Activated CD4-positive, alpha-beta T cell treated with anti-CD3 and anti-CD28 coated beads, Interleukin-2, amount 10 ng/mL, durations not matched to agents 24 days and 14 days (primary cell): ENCODE measurements at regions of chr20 and their contacts with region 1.

Region 1: GRCh38 chr20:51404298-51405060 is 138.0 kb downstream of the NFATC2 start:
- DNase-seq: peak; percentile 94
- H3K4me3 Mint-ChIP-seq: peak overlapping the region; percentile 75
- H3K27ac Mint-ChIP-seq: peak overlapping the region; percentile 97
- H3K4me1 Mint-ChIP-seq: peaks cover 81% of the 10 kb centered on the region
- H3K27me3 Mint-ChIP-seq: no peaks in the 10 kb centered on the region

Region 2: GRCh38 chr20:51423290-51423667 is 18.8 kb after region 1 on chr20:
- intact Hi-C with region 1: loop called (anchors 2 kb)
- DNase-seq: no peak
- H3K4me3 Mint-ChIP-seq: no peak overlapping the region
- H3K27ac Mint-ChIP-seq: peak overlapping the region; percentile 59
- H3K4me1 Mint-ChIP-seq: peaks cover 43% of the 10 kb centered on the region
- H3K27me3 Mint-ChIP-seq: no peaks in the 10 kb centered on the region

Region 3: DNA sequence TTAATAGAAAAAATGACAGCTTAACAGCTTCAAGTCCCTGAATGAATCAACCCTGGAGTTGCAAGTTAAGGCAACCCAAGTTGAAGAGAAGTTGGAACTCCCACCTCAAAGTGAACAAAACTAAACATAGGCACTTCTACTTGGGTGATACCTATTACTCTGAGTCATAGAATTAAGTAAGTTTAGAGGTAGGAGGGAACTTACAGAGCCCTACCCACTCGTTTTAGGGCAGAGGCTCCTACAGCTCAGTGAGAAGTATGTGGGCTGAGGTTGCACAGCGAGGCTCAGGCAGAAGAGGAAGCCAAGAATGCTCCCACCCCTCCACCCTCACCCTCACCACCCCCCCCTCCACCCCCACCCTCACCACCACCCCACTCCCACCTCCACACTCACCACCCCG is 95.8 kb after region 1 on chr20:
- intact Hi-C with region 1: loop called (anchors 1 kb)
- DNase-seq: peak; percentile 85
- H3K4me3 Mint-ChIP-seq: peak overlapping the region; percentile 27
- H3K27ac Mint-ChIP-seq: peak overlapping the region; percentile 85
- H3K4me1 Mint-ChIP-seq: peaks cover 72% of the 10 kb centered on the region
- H3K27me3 Mint-ChIP-seq: no peaks in the 10 kb centered on the region